ENCODE measurements at regions of chr17 and their contacts with region 1.

Region 1: GRCh38 chr17:44543213-44543904 is 13.9 kb upstream of the FZD2 start:
- DNase-seq: no peak
- ATAC-seq: no peak
- H3K4me3 ChIP-seq: no peak overlapping the region
- H3K27ac ChIP-seq: no peak overlapping the region
- H3K4me1 ChIP-seq: no peaks in the 10 kb centered on the region
- H3K27me3 ChIP-seq: no peaks in the 10 kb centered on the region

Region 2: DNA sequence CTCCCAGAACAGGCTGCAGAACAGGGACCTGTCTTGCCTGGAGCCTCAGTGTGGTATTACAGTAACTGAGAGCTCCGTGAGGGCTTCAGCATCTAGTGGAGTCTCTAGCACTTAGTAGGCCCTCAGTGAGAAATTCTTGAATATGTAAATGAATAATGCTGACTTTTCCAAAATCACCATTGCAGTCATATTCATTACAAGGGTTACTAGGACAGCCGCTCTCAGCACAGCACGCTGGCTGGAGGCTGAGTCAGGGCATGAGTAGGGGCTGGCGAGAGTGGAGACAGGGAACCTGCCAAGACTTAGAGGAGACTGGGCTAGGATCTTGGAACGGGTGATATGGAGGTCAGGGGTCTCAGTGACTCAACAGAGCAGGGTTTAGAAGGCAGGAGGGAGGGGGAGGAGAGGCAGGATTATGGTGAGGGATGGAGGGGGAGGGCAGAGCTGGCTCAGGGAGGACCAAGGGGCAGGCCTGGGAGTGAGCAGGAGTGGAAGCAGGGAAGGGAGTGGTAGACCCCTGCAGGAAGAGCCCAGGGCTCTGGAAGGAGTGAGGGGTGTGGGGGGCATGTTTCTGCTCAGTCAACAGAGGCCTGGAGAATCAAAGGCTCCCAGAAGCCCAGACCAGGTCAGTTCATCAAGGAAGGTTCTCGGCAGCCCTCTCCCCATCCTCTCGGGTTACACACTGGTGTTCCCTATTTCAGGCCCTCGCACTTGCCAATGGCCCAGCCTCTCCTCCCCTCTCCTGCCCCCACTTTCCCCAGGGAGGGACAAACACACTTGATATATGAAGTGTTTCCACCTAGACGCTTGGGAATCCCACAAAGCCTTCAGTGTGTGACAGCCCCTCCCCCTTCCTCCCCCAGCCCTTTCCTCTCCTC is 56.2 kb after region 1 on chr17:
- intact Hi-C with region 1: loop called in 1 of 4 experiments (anchors 10 kb)
- DNase-seq: peak; percentile 85 to 90 (median 87)
- ATAC-seq: peak; percentile 90 to 93
- H3K4me3 ChIP-seq: no peak overlapping the region
- H3K27ac ChIP-seq: no peak overlapping the region
- H3K4me1 ChIP-seq: no peaks in the 10 kb centered on the region
- H3K27me3 ChIP-seq: no peaks in the 10 kb centered on the region